Dendritic cell treated with granulocyte-macrophage colony-stimulating factor and Interleukin-4, amounts not matched to agents 40 ng/mL and 50 ng/mL, for 4 days (primary cell): ENCODE measurements at regions of chr6 and their contacts with region 1.

Region 1: DNA sequence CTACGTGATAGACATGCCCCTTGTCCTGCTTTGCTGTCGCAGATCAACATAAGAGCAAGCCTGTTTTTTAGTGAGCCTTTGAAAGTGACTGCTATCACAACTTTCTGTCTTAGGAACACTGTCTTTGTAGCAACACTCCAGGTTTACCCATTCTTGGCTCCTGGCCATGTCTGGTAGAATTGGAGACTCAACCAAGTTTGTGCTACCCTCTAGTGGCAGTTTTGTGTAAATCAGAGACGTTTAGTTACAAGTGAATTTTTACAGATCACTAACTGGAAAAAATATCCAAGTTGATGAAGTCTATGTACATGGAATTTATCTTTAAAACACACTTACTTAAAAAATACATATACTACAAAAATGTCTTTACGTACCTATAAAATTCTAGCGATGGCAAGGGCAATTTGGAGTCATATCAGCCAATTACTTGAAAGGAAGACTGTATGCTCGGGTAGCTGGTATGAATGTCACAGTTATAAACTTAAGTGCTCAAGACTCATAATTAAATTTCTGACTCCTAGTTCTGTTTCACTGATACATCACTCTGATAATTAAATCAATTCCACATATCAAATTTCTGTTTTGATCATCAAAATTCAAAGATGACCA is 101.4 kb downstream of the ADGB start:
- H3K4me3 Mint-ChIP-seq: no peak overlapping the region
- H3K27ac Mint-ChIP-seq: no peak overlapping the region
- H3K4me1 Mint-ChIP-seq: no peaks in the 10 kb centered on the region
- H3K27me3 Mint-ChIP-seq: no peaks in the 10 kb centered on the region

Region 2: DNA sequence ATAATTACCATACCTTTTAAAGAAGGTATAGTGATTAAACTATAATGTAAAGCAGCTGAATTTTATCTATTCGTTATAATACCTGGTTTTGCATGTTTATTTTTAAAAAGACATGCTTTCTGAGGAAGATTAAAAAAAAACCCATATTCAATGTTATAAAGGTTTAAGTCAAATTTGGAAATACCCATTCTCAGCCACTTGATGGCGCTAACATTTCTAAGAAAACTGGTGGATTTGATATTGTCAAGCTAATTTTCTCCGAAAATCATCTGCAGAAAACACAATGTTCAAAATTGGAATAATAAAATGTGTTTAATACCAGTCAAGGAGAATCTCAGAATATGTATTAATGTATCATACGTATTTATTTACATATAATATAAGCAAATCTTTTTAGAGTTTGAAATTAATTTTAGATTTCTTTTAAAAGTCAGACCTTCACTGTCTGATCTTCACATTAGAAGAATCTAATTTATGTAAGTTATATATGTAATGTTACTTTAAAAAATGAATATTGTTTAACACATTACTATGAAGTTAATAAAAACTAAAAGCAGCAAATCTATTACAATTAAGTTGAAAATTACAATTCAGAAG is 771.0 kb before region 1 on chr6:
- intact Hi-C with region 1: loop called (anchors 5 kb)
- H3K4me3 Mint-ChIP-seq: no peak overlapping the region
- H3K27ac Mint-ChIP-seq: no peak overlapping the region
- H3K4me1 Mint-ChIP-seq: no peaks in the 10 kb centered on the region
- H3K27me3 Mint-ChIP-seq: no peaks in the 10 kb centered on the region

Region 3: DNA sequence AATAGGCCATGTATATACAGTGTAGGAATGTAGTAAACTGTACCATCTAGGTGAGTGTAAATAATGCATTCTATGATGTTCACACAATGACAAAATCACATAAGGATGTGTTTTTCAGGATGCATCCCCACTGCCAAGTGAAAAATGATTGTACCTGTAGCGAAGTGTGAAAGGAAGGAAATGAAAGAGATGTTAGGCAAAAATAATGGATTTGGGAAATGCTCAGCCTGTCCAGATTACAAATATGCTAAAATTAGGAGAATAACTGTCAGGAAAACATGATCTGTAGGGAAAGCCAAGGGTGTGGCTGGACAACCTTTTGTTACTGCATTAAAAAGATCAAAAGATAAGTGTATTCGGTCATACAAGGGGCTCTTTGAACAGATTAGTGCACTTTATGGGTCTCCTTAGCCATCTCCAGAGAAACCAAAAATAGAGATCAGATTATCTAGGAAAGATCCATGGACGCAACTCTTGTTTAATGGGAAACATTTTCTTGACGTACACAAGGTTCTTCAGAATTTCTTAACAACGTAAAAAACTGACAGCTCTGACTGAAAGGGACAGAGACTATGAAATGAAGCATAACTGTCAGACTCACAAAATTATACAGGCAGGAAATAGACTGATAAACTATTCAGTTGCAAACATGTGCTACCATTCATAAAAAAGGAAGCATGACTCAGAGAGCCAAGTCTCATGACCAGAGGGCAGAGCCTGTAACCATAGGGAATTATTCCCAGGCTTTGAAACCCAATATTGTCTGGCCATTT is 410.2 kb before region 1 on chr6:
- intact Hi-C with region 1: loop called (anchors 5 kb)
- H3K4me3 Mint-ChIP-seq: no peak overlapping the region
- H3K27ac Mint-ChIP-seq: peak overlapping the region; percentile 59
- H3K4me1 Mint-ChIP-seq: peaks cover 35% of the 10 kb centered on the region
- H3K27me3 Mint-ChIP-seq: no peaks in the 10 kb centered on the region

Region 4: DNA sequence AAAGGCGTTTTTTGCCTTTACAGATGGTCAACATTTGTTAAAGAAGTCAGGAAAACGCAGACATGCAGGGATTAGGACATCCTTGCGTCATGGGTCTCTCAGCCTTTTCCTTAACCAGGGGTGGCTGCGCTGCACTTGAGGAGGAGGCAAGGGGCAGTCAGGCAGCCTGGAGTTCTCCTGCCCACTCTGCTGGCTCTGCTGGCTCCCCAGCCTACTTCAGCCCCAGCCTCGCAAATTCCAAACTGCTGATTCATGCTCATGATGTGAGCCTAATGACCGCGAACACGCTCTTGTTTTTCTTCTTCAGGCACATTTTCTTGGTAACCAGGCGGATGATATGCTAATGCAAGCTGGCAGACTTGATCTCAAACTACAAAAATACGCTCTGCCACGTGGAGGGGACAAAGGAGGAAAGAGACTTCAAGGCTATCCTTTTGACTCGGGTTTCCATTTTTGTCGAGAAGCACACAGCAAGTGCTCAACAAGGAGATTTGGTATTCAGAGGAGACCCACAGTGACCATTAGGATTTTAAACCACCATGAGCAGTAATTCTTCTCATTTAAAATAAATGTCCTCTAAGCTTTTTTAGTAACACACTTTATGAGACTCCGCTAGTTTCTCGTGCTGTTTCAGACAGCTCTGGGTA is 213.8 kb after region 1 on chr6:
- intact Hi-C with region 1: no loop called
- H3K4me3 Mint-ChIP-seq: peak overlapping the region; percentile 55
- H3K27ac Mint-ChIP-seq: peak overlapping the region; percentile 84
- H3K4me1 Mint-ChIP-seq: peaks cover 44% of the 10 kb centered on the region
- H3K27me3 Mint-ChIP-seq: no peaks in the 10 kb centered on the region

Region 5: GRCh38 chr6:147087641-147088040 is 387.5 kb after region 1 on chr6:
- intact Hi-C with region 1: no loop called
- H3K4me3 Mint-ChIP-seq: no peak overlapping the region
- H3K27ac Mint-ChIP-seq: no peak overlapping the region
- H3K4me1 Mint-ChIP-seq: no peaks in the 10 kb centered on the region
- H3K27me3 Mint-ChIP-seq: no peaks in the 10 kb centered on the region